ENCODE measurements at regions of chr2 and their contacts with region 1.

Region 1: GRCh38 chr2:158179660-158180059 is 78.0 kb downstream of the UPP2 start:
- DNase-seq: no peak
- H3K4me3 Mint-ChIP-seq: no peak overlapping the region
- H3K27ac Mint-ChIP-seq: no peak overlapping the region
- H3K4me1 Mint-ChIP-seq: peaks cover 28% of the 10 kb centered on the region
- H3K27me3 Mint-ChIP-seq: no peaks in the 10 kb centered on the region
- CTCF ChIP-seq: peak; percentile 42

Region 2: DNA sequence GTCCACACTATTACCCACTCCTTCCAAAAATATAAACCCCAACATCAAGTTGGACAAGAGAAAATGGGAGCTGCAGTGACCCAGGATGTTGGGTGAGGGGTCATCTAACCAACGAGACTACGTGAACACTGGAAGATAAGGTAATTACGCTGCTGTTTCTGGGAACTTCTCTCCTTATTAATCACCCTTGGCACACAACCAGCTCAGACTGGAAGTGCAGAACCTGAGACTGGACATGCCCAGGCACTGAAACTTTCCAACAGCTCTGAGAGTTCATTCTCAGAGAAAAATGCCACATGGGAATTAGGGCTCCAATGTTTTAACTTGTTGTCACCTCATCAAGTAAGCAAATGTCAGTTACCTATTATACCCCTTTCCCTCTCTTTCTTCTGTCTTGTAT is 141.6 kb after region 1 on chr2:
- CTCF ChIA-PET with region 1: no interaction called
- intact Hi-C with region 1: loop called (anchors 10 kb)
- DNase-seq: peak; percentile 24
- H3K4me3 Mint-ChIP-seq: no peak overlapping the region
- H3K27ac Mint-ChIP-seq: no peak overlapping the region
- H3K4me1 Mint-ChIP-seq: peaks cover 9% of the 10 kb centered on the region
- H3K27me3 Mint-ChIP-seq: no peaks in the 10 kb centered on the region
- CTCF ChIP-seq: no peak

Region 3: DNA sequence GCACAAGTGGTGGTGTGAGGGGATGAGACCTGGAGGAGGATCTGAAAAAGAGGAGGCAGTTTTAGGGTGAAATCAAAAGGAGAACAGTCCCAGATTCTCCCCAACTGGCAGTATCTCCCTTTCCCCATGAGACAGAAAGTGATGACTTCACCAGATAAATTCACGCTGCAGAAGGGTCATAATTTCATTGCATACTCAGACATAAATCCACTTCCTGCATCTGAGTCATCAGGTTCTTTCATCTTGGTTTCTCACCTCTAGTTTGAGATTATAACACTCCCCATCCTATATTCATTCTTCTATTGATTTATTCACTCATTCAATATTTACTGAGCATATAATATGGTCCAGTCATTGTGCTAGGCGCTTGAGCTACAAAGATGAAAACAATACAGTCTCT is 212.2 kb after region 1 on chr2:
- CTCF ChIA-PET with region 1: no interaction called
- intact Hi-C with region 1: no loop called
- DNase-seq: peak; percentile 6
- H3K4me3 Mint-ChIP-seq: no peak overlapping the region
- H3K27ac Mint-ChIP-seq: peak overlapping the region; percentile 71
- H3K4me1 Mint-ChIP-seq: peaks cover 41% of the 10 kb centered on the region
- H3K27me3 Mint-ChIP-seq: no peaks in the 10 kb centered on the region
- CTCF ChIP-seq: no peak

Measured in Calu3 (cell line).